Activated naive CD8-positive, alpha-beta T cell treated with anti-CD3 and anti-CD28 coated beads, Interleukin-2, amount 10 ng/mL, durations not matched to agents 7 days and 5 days (primary cell): ENCODE measurements at regions of chr9 and their contacts with region 1.

Region 1: DNA sequence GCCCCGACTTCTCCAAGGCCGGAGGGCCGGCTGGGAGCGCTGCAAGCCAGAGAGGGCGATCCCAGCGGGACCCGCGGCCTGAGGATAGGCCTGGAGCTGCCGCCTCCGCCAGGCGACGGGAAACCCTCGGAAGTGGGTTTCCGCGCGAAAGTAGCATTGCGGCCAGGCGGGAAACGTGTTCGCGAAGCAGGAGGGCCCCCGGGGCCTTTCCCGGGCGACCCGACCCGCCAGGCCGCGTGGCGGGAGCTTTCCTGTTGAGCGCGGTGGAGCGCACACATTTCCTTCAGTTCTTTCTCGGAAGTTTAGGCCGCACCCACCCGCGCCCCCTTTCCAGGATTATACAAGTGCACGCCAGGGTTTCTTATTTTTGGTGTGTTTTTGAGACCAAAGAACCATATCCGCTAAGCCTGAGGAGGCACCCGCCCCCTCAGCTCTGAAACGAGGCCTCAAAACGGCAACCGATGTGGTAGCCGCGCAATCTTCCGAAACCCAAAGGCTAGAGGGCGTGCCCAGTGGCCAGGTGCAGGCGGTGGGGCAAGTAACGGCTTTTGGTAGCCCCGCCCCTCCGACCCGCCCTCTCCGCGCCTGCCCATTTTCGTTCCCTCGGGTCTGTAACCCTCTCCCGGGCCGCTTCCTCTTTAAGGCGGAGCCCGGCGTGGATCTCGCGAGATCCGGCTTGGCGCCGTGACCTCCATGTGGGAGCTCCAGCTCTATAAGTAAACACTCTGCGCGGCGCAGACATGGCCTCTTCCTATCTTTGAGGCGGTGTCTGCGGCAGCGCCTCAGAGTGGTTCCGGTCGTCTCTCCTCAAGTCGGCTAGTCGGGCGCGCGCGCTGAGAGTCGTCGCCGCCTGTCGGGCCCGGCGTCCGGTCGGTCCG is at the start of gene UHRF2:
- DNase-seq: peak; percentile 96
- ATAC-seq: peak; percentile 91
- H3K4me3 Mint-ChIP-seq: peak within 1 kb of the TSS; percentile 86
- H3K27ac Mint-ChIP-seq: peak within 1 kb of the TSS; percentile 94
- H3K4me1 Mint-ChIP-seq: peaks cover 23% of the 10 kb centered on the region
- H3K27me3 Mint-ChIP-seq: peaks cover 13% of the 10 kb centered on the region
- total RNA-seq, gene UHRF2: 78.6 to 84.8 TPM

Region 2: DNA sequence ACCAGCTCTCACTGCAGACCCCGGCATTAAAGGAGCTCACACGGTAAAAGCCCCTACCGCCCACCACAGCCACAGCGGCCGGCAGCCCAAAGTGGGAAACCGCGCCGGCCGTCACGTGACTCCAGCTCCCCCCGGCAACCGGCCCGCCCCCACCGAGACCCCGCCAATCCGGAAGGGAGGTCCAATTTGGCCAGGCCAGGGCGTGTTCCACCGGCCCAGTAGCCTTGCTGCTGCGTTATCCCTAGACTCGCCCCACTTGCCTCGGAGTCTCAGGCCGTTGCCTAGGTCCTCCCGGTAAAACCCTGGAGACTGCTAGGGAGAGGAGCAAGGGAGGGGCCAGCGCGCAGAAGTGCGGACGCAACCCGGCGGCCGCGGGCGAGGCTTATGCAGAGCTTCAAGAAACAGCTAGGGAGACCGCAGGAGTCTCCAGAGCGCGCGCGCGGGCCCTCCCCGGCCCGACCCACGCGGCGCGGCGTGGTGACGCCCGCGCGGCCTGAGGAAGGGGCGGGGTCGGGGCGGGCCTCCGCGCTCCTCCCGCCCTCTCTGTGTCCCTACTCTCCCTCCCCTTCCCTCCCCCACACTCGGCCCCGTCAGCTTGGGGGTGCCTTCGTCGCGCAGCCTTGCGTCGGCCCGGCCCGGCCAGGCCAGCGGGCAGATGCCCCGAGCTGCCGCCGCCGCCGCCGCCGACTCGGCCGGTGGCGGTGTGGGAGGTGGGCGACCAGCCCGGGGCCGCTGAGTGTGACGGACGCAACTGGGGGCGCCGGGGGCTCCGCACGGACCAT is 784.0 kb before region 1 on chr9 and contains the start of gene RIC1:
- POLR2A ChIA-PET with region 1: interaction called, 10 read pairs
- DNase-seq: peak; percentile 94
- ATAC-seq: peak; percentile 88
- H3K4me3 Mint-ChIP-seq: peak within 1 kb of the TSS; percentile 99
- H3K27ac Mint-ChIP-seq: peak within 1 kb of the TSS; percentile 99
- H3K4me1 Mint-ChIP-seq: peaks cover 46% of the 10 kb centered on the region
- H3K27me3 Mint-ChIP-seq: no peaks in the 10 kb centered on the region
- total RNA-seq, gene RIC1: 20.7 to 21.4 TPM

Region 3: GRCh38 chr9:6008169-6008979 is 404.4 kb before region 1 on chr9:
- POLR2A ChIA-PET with region 1: interaction called, 11 read pairs
- DNase-seq: peak; percentile 87
- ATAC-seq: peak; percentile 77
- H3K4me3 Mint-ChIP-seq: peak overlapping the region; percentile 81
- H3K27ac Mint-ChIP-seq: peak overlapping the region; percentile 86
- H3K4me1 Mint-ChIP-seq: peaks cover 38% of the 10 kb centered on the region
- H3K27me3 Mint-ChIP-seq: no peaks in the 10 kb centered on the region

Region 4: DNA sequence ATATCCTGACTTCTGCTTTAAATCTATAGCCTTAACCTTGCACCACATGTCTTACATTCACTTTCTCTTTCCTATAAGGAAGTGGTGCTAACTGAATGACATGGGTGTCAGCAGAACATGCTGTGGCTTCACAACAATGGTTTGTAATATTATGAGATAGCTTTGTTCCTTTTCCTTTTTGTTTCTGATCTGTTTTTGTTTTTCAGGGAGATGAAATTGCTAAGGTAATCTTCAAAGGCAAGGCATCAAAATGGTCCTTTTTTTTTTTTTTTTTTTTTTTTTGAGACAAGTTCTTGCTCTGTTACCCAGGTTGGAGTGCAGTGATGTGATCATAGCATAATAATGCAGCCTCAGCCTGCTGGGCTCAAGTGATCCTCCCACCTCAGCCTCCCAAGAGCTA is 343.7 kb before region 1 on chr9:
- POLR2A ChIA-PET with region 1: interaction called, 11 read pairs
- DNase-seq: no peak
- ATAC-seq: peak; percentile 98
- H3K4me3 Mint-ChIP-seq: peak overlapping the region; percentile 60
- H3K27ac Mint-ChIP-seq: peak overlapping the region; percentile 90
- H3K4me1 Mint-ChIP-seq: peaks cover 7% of the 10 kb centered on the region
- H3K27me3 Mint-ChIP-seq: no peaks in the 10 kb centered on the region

Region 5: GRCh38 chr9:6428940-6429889 is 16.5 kb after region 1 on chr9:
- POLR2A ChIA-PET with region 1: interaction called, 29 read pairs
- DNase-seq: no peak
- ATAC-seq: peak; percentile 80
- H3K4me3 Mint-ChIP-seq: peak overlapping the region; percentile 31
- H3K27ac Mint-ChIP-seq: peak overlapping the region; percentile 67
- H3K4me1 Mint-ChIP-seq: peaks cover 37% of the 10 kb centered on the region
- H3K27me3 Mint-ChIP-seq: no peaks in the 10 kb centered on the region

Region 6: GRCh38 chr9:6681147-6681956 is 268.6 kb after region 1 on chr9:
- POLR2A ChIA-PET with region 1: interaction called, 30 read pairs
- DNase-seq: peak; percentile 90
- ATAC-seq: peak; percentile 92
- H3K4me3 Mint-ChIP-seq: peak overlapping the region; percentile 91
- H3K27ac Mint-ChIP-seq: peak overlapping the region; percentile 99
- H3K4me1 Mint-ChIP-seq: peaks cover 17% of the 10 kb centered on the region
- H3K27me3 Mint-ChIP-seq: no peaks in the 10 kb centered on the region

Region 7: DNA sequence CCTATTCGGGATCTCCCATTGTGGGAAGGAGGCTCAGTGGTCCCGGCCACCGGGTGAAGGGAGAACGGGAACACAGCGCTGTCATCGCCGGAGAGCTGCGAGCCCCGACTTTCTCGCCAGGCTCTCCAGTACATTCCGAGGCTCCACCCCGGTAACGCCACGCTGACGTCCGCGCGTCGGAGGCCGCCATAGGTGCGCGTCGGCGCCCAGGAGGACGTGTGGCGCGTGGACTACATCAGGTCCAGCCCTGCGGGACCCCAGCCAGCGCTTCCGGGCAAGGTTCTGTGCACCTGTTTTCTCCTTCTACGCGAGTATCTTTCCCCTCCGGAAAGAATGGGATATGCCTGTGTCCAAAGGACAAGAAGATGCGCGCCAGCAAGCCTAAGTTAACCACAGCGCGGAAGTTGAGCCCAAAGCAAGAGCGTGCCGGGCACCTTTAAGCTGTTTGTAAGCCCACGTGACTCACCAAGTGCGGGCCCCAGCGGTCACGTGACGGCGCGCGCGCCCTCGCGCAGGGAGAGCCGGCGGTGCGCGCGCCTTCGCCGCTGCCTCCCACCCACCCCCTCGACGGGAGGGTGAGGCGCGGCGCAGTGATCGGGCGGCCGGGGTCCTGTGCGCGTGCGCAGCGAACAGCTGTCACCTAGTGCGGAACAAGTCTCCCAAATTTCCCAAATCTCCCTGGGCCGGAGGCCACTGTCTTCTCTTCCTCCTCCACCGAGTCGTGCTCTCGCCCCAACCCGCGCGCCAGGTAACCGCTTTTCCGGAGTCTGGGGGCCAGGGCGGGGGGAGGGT is 344.9 kb after region 1 on chr9 and contains the start of gene KDM4C:
- POLR2A ChIA-PET with region 1: interaction called, 47 read pairs
- DNase-seq: peak; percentile 97
- ATAC-seq: peak; percentile 86
- H3K4me3 Mint-ChIP-seq: peak within 1 kb of the TSS; percentile 93
- H3K27ac Mint-ChIP-seq: peak within 1 kb of the TSS; percentile 100
- H3K4me1 Mint-ChIP-seq: peaks cover 22% of the 10 kb centered on the region
- H3K27me3 Mint-ChIP-seq: no peaks in the 10 kb centered on the region
- total RNA-seq, gene KDM4C: 75.2 to 77.1 TPM